CD8-positive, alpha-beta T cell (primary cell): ENCODE measurements at regions of chrX and their contacts with region 1.

Region 1: DNA sequence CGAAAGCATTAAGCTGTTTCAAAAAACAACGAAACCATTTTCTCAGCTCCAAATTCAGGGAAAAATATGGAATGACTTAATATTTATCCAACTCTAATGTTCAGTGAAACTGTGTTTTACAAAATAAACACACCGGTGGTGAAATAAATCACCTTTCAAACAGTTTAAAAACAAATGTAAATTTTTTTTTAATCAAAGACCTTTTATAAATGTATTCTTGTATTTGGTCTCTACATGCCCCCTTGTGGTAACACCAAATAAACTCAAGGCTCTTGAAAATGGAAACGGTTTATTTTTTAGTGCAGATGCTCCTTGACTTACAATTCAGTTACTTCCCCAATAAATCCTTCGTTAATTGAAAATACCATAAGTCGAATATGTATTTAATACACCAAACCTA is 45.8 kb upstream of the ITM2A start:
- DNase-seq: peak in 2 of 9 experiments; percentile 49 to 64
- ATAC-seq: no peak
- H3K4me3 ChIP-seq: peak overlapping the region; percentile 25 to 27
- H3K4me3 Mint-ChIP-seq: peak overlapping the region; percentile 67
- H3K27ac ChIP-seq: no peak overlapping the region
- H3K27ac Mint-ChIP-seq: peak overlapping the region; percentile 32
- H3K4me1 ChIP-seq: no peaks in the 10 kb centered on the region
- H3K4me1 Mint-ChIP-seq: peaks cover 17% of the 10 kb centered on the region
- H3K27me3 ChIP-seq: no peaks in the 10 kb centered on the region
- H3K27me3 Mint-ChIP-seq: no peaks in the 10 kb centered on the region
- CTCF ChIP-seq: peak; percentile 55

Region 2: GRCh38 chrX:78886550-78886949 is 526.4 kb before region 1 on chrX:
- CTCF ChIA-PET with region 1: no interaction called
- POLR2A ChIA-PET with region 1: no interaction called
- intact Hi-C with region 1: loop called in 1 of 2 experiments (anchors 1 kb)
- DNase-seq: peak in 2 of 9 experiments; percentile 16 to 43
- ATAC-seq: peak; percentile 54
- H3K4me3 ChIP-seq: no peak overlapping the region
- H3K4me3 Mint-ChIP-seq: no peak overlapping the region
- H3K27ac ChIP-seq: no peak overlapping the region
- H3K27ac Mint-ChIP-seq: peak overlapping the region; percentile 16
- H3K4me1 ChIP-seq: no peaks in the 10 kb centered on the region
- H3K4me1 Mint-ChIP-seq: peaks cover 6% of the 10 kb centered on the region
- H3K27me3 ChIP-seq: no peaks in the 10 kb centered on the region
- H3K27me3 Mint-ChIP-seq: no peaks in the 10 kb centered on the region
- CTCF ChIP-seq: peak; percentile 36

Region 3: GRCh38 chrX:79366873-79367749 is 45.9 kb before region 1 on chrX and contains the start of gene ITM2A:
- CTCF ChIA-PET with region 1: no interaction called
- POLR2A ChIA-PET with region 1: interaction called, 3 read pairs
- intact Hi-C with region 1: loop called (anchors 2 kb)
- DNase-seq: peak; percentile 27 to 81 (median 64)
- ATAC-seq: peak; percentile 80
- H3K4me3 ChIP-seq: peak within 1 kb of the TSS; percentile 54 to 85
- H3K4me3 Mint-ChIP-seq: peak within 1 kb of the TSS; percentile 95
- H3K27ac ChIP-seq: peak within 1 kb of the TSS; percentile 79 to 94
- H3K27ac Mint-ChIP-seq: peak within 1 kb of the TSS; percentile 97
- H3K4me1 ChIP-seq: peaks cover 18% of the 10 kb centered on the region
- H3K4me1 Mint-ChIP-seq: peaks cover 39% of the 10 kb centered on the region
- H3K27me3 ChIP-seq: no peaks in the 10 kb centered on the region
- H3K27me3 Mint-ChIP-seq: no peaks in the 10 kb centered on the region
- CTCF ChIP-seq: no peak
- total RNA-seq, gene ITM2A: 123 to 125 TPM